ENCODE measurements at regions of chr1 and their contacts with region 1.

Region 1: DNA sequence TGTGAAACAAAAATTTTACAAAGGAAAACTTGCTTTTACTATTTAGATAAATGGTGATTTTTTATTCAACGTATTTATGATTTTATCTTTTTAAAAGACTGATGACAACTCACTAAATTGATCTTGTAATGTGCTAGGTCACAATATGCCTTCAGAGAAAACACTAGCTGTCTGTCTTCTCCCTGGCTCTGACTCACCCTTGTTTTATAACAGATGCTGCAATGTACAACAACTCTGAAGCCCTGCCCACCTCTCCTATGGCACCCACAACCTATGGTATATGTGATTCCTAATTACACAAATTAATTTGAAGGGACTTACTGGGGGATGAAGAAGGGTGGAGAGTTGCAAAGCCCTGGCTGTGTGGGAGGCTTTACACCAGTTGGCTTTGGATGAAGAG is 24.7 kb upstream of the HSD17B7 start:
- DNase-seq: no peak
- H3K4me3 ChIP-seq: no peak overlapping the region
- H3K27ac ChIP-seq: no peak overlapping the region
- H3K4me1 ChIP-seq: no peaks in the 10 kb centered on the region
- H3K27me3 ChIP-seq: no peaks in the 10 kb centered on the region
- CTCF ChIP-seq: no peak

Region 2: DNA sequence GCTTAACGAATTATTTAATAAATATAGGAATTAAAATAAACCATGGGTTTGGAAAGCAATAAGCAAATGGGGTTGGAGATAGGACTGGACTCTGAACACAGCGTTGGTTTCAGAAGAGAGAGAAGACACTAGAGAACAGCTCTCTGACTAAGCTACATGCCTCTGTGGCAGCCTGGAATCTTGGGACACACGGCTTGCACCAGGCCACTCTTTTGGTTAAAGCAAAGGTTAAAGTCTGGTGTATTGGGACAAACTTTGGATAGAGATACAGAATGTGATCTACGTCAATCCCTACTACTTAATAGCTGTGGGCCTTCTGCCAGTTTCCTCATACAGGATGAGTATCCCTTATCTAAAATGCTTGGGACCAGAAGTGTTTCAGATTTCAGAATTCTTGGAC is 25.0 kb before region 1 on chr1:
- CTCF ChIA-PET with region 1: no interaction called
- POLR2A ChIA-PET with region 1: no interaction called
- intact Hi-C with region 1: loop called (anchors 2 kb)
- DNase-seq: no peak
- H3K4me3 ChIP-seq: no peak overlapping the region
- H3K27ac ChIP-seq: no peak overlapping the region
- H3K4me1 ChIP-seq: no peaks in the 10 kb centered on the region
- H3K27me3 ChIP-seq: no peaks in the 10 kb centered on the region
- CTCF ChIP-seq: no peak

Measured in PC-9 (cell line).